CD4-positive, alpha-beta memory T cell (primary cell): ENCODE measurements at regions of chr18 and their contacts with region 1.

Region 1: GRCh38 chr18:24138789-24139616 is at the start of gene CABYR:
- DNase-seq: peak; percentile 71 to 86 (median 71)
- H3K4me3 ChIP-seq: peak within 1 kb of the TSS; percentile 49 to 67
- H3K4me3 Mint-ChIP-seq: peak within 1 kb of the TSS; percentile 86 to 98 (median 92)
- H3K27ac ChIP-seq: peak within 1 kb of the TSS; percentile 37
- H3K27ac Mint-ChIP-seq: peak within 1 kb of the TSS; percentile 79 to 94 (median 87)
- H3K4me1 ChIP-seq: peaks cover 29% of the 10 kb centered on the region
- H3K4me1 Mint-ChIP-seq: peaks cover 26 to 44% (median 34%) of the 10 kb centered on the region in 4 donors
- H3K27me3 ChIP-seq: peaks cover 7% of the 10 kb centered on the region
- H3K27me3 Mint-ChIP-seq: peaks cover 8 to 11% of the 10 kb centered on the region in 2 donors
- total RNA-seq, gene CABYR: 1.3 to 2.2 TPM

Region 2: GRCh38 chr18:23828426-23828825 is 310.6 kb before region 1 on chr18:
- CTCF ChIA-PET with region 1: no interaction called
- POLR2A ChIA-PET with region 1: no interaction called
- intact Hi-C with region 1: loop called (anchors 5 kb)
- DNase-seq: peak; percentile 68 to 87 (median 83)
- H3K4me3 ChIP-seq: no peak overlapping the region
- H3K4me3 Mint-ChIP-seq: peak overlapping the region in 1 of 8 donors; percentile 57
- H3K27ac ChIP-seq: peak overlapping the region; percentile 48
- H3K27ac Mint-ChIP-seq: peak overlapping the region in 6 of 7 donors; percentile 80 to 96 (median 92)
- H3K4me1 ChIP-seq: peaks cover 15% of the 10 kb centered on the region
- H3K4me1 Mint-ChIP-seq: peaks cover 15 to 36% (median 19%) of the 10 kb centered on the region in 4 donors
- H3K27me3 ChIP-seq: no peaks in the 10 kb centered on the region
- H3K27me3 Mint-ChIP-seq: no peaks in the 10 kb centered on the region

Region 3: DNA sequence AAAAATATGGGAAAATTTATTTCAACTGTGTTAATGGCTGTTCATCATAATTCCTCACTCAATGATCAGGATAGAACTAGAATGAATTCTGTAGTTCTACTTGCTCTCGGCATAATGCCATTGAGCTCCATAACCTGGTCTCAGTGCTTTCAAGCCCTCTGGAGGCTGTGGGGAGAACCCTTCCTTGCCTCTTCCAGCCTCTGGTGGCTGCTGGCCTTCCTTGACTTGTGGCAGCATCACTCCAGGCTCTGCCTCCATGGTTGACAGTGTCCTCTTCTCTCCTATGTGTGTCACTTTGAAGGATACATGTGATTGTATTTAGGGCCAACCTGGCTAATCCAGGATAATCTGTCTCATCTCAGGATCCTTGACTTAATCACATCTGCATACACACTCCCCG is 27.1 kb before region 1 on chr18:
- CTCF ChIA-PET with region 1: no interaction called
- POLR2A ChIA-PET with region 1: no interaction called
- intact Hi-C with region 1: no loop called
- DNase-seq: no peak
- H3K4me3 ChIP-seq: no peak overlapping the region
- H3K4me3 Mint-ChIP-seq: no peak overlapping the region
- H3K27ac ChIP-seq: peak overlapping the region; percentile 8
- H3K27ac Mint-ChIP-seq: peak overlapping the region in 5 of 7 donors; percentile 14 to 75 (median 20)
- H3K4me1 ChIP-seq: peaks cover 16% of the 10 kb centered on the region
- H3K4me1 Mint-ChIP-seq: peaks cover 23 to 55% (median 40%) of the 10 kb centered on the region in 4 donors
- H3K27me3 ChIP-seq: no peaks in the 10 kb centered on the region
- H3K27me3 Mint-ChIP-seq: no peaks in the 10 kb centered on the region